ENCODE measurements at regions of chr17 and their contacts with region 1.

Region 1: GRCh38 chr17:77068915-77069314 is 71.9 kb upstream of the SEC14L1 start:
- DNase-seq: no peak
- H3K4me3 ChIP-seq: no peak overlapping the region
- H3K27ac ChIP-seq: no peak overlapping the region
- H3K27me3 ChIP-seq: peaks cover 0 to 20% (median 0%) of the 10 kb centered on the region in 45 donors
- CTCF ChIP-seq: no peak

Region 2: GRCh38 chr17:77011173-77012011 is 57.5 kb before region 1 on chr17:
- intact Hi-C with region 1: loop called in 1 of 2 experiments (anchors 5 kb)
- DNase-seq: peak in 3 of 10 donors; percentile 47 to 73 (median 58)
- H3K4me3 ChIP-seq: no peak overlapping the region
- H3K27ac ChIP-seq: no peak overlapping the region
- H3K27me3 ChIP-seq: peaks cover 0 to 3% (median 0%) of the 10 kb centered on the region in 45 donors
- CTCF ChIP-seq: peak; percentile 18 to 69 (median 55)

Region 3: DNA sequence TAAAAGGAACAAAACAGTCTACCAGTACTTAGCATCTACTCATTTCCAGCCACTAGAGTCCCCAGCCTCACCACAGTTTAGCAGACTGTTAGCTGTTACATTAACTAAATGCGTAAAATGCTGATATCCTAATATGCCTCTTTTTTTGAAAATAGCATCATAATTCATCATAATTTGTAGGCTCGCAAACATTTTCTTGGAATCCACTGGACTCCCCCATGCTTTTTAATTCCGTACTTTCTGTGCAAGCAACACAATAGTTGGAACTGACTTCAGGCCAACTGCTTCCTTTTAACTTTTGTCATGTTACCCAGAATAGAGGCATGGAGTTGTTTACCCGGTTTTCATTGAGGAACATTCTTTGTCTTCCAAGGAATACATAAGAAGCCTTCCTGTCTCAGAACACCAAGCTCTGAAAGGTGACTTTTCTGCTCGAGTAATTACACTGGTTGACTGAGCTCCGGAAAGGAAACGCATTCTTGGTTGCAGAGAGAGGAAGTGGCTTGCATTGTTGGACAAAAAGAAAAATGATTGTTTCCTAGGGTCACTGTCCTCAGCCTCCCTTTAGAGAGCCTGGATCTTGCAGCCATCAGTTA is 40.9 kb after region 1 on chr17:
- intact Hi-C with region 1: no loop called
- DNase-seq: no peak
- H3K4me3 ChIP-seq: peak overlapping the region in 6 of 59 donors; percentile 2 to 36 (median 13)
- H3K27ac ChIP-seq: peak overlapping the region; percentile 43 to 95 (median 87)
- H3K27me3 ChIP-seq: no peaks in the 10 kb centered on the region
- CTCF ChIP-seq: peak in 8 of 56 donors; percentile 4 to 17 (median 10)